Left ventricle myocardium superior (tissue), 1 donor: ENCODE measurements at regions of chr4 and their contacts with region 1.

Region 1: DNA sequence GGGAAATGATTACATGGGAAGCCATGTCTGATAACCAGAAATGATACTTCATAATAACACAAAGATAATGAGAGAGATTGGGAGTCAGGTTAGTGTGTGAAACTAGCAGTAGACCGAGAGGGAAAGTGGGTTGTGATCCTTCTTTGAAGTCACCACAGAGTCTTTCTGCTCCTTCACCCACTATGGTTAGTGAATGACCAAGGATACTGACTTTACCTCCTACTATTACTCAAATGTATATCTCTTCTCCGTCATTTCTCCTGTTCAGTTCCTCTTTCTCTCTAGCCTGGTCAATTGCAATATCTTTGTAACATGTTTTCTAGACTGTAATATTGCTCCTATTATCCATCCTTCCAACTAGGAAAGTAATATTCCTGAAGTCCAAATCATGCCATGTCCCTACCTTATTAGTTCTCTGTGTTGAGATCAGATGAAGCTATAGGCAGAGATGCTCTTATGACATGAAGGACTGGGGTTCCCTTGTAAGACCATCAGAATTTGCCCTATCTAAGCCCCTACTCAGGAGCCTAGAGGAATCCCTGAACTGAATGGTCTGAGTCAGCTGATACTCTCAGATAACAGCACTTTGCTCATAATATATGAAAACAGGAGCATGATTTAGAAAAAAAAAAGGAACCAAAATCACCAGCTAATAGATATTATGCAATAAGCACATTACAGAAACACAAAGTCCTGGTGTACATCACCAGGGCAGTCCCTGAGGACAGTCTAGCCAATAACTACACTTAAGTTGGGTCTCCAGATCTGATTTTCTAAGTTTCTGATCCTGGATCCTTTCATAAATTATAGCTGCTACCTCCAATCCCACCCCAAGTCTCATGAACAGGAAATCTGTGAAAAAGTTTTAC is 81.2 kb downstream of the SHROOM3 start:
- DNase-seq: no peak
- ATAC-seq: no peak

Region 2: DNA sequence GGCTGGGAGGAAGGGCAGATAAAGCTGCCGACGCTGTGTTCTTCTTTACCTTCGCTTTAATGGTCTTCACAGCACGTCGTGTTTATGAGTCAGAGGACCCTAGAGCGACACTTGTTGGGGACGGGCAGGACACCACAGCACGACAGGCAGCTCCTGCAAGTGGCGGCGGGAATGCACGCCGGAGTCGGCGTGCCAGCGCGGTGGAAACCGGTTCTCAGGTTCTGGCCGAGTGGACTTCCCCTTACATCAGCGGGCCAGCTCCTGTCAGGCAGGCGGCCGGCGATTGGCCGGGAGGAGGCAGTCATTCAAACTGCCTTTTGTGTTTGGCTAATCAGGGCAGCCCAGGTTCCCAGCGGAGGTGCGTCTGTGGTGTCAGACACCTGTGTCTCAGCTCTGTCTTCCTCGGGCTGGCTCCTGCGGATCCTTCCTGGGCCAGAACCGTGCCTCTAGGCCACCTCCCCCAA is 69.7 kb after region 1 on chr4:
- intact Hi-C with region 1: loop called (anchors 10 kb)
- DNase-seq: peak; percentile 87
- ATAC-seq: peak; percentile 91

Region 3: GRCh38 chr4:76758290-76758882 is 242.2 kb after region 1 on chr4:
- intact Hi-C with region 1: loop called (anchors 5 kb)
- DNase-seq: no peak
- ATAC-seq: peak; percentile 55